Astrocyte of the cerebellum (primary cell): ENCODE measurements at regions of chr5 and their contacts with region 1.

Region 1: DNA sequence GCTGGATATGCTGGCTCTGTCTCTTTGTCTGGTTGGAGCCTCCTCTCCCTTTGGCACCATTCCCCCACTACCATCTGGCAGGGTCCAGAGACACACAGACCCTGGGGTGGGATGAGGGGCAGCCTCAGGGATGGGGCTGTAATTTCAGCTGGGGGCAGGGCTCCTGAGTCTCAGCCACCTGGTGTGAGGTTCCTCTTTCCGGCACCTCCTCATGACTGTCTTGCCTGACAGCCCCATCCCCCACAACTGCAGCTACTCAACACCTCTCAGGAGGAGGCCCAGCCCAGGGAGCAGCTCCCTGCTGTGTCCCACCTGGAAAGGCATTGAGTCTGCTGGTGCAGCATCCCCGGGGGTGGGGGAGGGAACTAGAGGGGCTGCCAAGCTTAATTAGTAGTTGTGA is 11.7 kb upstream of the RPS14 start:
- DNase-seq: no peak
- H3K4me3 ChIP-seq: no peak overlapping the region
- CTCF ChIP-seq: no peak

Region 2: GRCh38 chr5:150409638-150410523 is 51.4 kb before region 1 on chr5:
- in situ Hi-C with region 1: loop called (anchors 10 kb)
- DNase-seq: peak; percentile 78
- H3K4me3 ChIP-seq: no peak overlapping the region
- CTCF ChIP-seq: no peak

Region 3: GRCh38 chr5:150503977-150504620 is 42.9 kb after region 1 on chr5:
- in situ Hi-C with region 1: loop called (anchors 5 kb)
- DNase-seq: no peak
- H3K4me3 ChIP-seq: no peak overlapping the region
- CTCF ChIP-seq: no peak

Region 4: GRCh38 chr5:150544611-150545219 is 83.5 kb after region 1 on chr5:
- in situ Hi-C with region 1: loop called (anchors 5 kb)
- DNase-seq: no peak
- H3K4me3 ChIP-seq: no peak overlapping the region
- CTCF ChIP-seq: peak; percentile 83

Region 5: DNA sequence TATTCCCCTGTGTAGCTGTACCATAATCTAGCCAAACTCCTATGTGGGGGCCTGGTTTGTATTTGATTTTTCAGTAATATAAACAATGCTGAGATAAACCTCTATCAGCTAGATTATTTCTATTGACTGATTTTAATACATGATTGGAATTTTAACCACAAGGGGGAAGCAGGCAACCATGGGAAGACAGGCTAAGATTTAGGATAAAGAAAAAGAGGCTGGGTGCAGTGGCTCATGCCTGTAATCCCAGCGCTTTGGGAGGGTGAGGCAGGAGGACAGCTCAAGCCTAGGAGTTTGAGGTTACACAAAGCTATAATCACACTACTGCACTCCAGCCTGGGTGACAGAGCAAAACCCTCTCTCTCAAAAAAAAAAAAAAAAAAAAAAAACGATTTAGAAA is 541.0 kb after region 1 on chr5:
- in situ Hi-C with region 1: no loop called
- DNase-seq: no peak
- H3K4me3 ChIP-seq: no peak overlapping the region
- CTCF ChIP-seq: peak; percentile 31